SK-N-SH (cell line): ENCODE measurements at regions of chr18 and their contacts with region 1.

Region 1: GRCh38 chr18:47204908-47205522 is 28.9 kb upstream of the IER3IP1 start:
- DNase-seq: peak; percentile 33
- H3K4me3 ChIP-seq: no peak overlapping the region; a peak in 1 of 4 replicates
- H3K27ac ChIP-seq: peak overlapping the region in 1 of 2 experiments; percentile 93; a peak in 1 of 4 replicates
- H3K4me1 ChIP-seq: peaks cover 0 to 16% of the 10 kb centered on the region in 2 experiments; a peak in 2 of 4 replicates
- H3K27me3 ChIP-seq: no peaks in the 10 kb centered on the region
- CTCF ChIP-seq: peak; percentile 87
- EP300 ChIP-seq: no peak
- RAD21 ChIP-seq: peak; percentile 79

Region 2: DNA sequence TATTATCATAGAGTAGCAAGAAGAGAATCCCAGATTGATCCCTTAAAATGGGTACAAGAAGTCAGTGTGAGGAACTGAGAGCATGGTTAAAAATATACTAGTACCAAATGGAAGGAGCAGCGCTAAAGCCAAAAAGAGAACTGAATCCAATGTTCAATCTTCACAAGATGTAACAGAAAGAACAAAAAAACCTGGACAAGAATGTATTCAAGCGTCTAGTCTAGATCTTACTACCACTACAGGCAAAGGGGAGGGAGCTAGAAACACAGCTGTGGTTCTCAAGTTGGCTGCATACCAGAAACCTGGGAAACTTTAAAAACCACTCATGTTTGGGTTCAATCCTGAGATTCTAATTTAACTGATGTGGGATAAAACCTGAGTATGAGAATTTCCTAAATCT is 345.2 kb before region 1 on chr18:
- CTCF ChIA-PET with region 1: no interaction called
- POLR2A ChIA-PET with region 1: no interaction called
- DNase-seq: no peak
- H3K4me3 ChIP-seq: no peak overlapping the region
- H3K27ac ChIP-seq: no peak overlapping the region
- H3K4me1 ChIP-seq: no peaks in the 10 kb centered on the region
- H3K27me3 ChIP-seq: no peaks in the 10 kb centered on the region
- CTCF ChIP-seq: no peak
- EP300 ChIP-seq: no peak
- RAD21 ChIP-seq: no peak

Region 3: DNA sequence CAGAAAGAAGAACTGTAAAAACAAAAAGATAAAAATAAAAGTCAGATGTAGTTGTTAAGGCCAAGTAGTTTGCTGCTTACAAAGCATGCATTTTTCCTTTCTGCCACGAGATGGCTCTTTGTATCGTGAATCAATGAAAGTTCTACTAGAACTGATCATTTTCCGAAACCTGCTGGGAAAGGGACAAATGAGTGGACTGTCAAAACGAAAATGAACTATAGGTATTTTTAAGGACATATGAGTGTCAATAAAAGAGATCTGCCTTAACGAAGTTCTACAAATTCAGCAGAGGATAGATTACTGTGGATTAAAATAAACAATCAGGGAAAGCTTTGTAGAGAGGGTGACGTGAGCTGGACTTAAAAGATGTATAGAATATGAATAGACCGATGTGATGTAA is 154.5 kb before region 1 on chr18:
- CTCF ChIA-PET with region 1: interaction called, 83 read pairs
- POLR2A ChIA-PET with region 1: no interaction called
- DNase-seq: peak; percentile 42
- H3K4me3 ChIP-seq: no peak overlapping the region
- H3K27ac ChIP-seq: no peak overlapping the region
- H3K4me1 ChIP-seq: no peaks in the 10 kb centered on the region
- H3K27me3 ChIP-seq: no peaks in the 10 kb centered on the region
- CTCF ChIP-seq: peak; percentile 77
- EP300 ChIP-seq: no peak
- RAD21 ChIP-seq: peak; percentile 77

Region 4: GRCh38 chr18:47100214-47100831 is 104.7 kb before region 1 on chr18:
- CTCF ChIA-PET with region 1: interaction called, 74 read pairs
- POLR2A ChIA-PET with region 1: no interaction called
- DNase-seq: peak; percentile 51
- H3K4me3 ChIP-seq: no peak overlapping the region
- H3K27ac ChIP-seq: no peak overlapping the region
- H3K4me1 ChIP-seq: no peaks in the 10 kb centered on the region
- H3K27me3 ChIP-seq: no peaks in the 10 kb centered on the region
- CTCF ChIP-seq: peak; percentile 75
- EP300 ChIP-seq: no peak
- RAD21 ChIP-seq: peak; percentile 91

Region 5: GRCh38 chr18:47150029-47150823 is 54.8 kb before region 1 on chr18 and contains the start of gene HDHD2:
- CTCF ChIA-PET with region 1: interaction called, 15 read pairs
- POLR2A ChIA-PET with region 1: interaction called, 10 read pairs
- DNase-seq: peak; percentile 93
- H3K4me3 ChIP-seq: peak within 1 kb of the TSS; percentile 85 to 93
- H3K27ac ChIP-seq: peak within 1 kb of the TSS; percentile 91 to 98
- H3K4me1 ChIP-seq: peaks cover 0 to 18% of the 10 kb centered on the region in 2 experiments; a peak in 2 of 4 replicates
- H3K27me3 ChIP-seq: no peaks in the 10 kb centered on the region
- CTCF ChIP-seq: no peak
- EP300 ChIP-seq: no peak
- RAD21 ChIP-seq: no peak
- polyA plus RNA-seq, gene HDHD2: 10.5 and 10.6 TPM in 2 replicates

Region 6: DNA sequence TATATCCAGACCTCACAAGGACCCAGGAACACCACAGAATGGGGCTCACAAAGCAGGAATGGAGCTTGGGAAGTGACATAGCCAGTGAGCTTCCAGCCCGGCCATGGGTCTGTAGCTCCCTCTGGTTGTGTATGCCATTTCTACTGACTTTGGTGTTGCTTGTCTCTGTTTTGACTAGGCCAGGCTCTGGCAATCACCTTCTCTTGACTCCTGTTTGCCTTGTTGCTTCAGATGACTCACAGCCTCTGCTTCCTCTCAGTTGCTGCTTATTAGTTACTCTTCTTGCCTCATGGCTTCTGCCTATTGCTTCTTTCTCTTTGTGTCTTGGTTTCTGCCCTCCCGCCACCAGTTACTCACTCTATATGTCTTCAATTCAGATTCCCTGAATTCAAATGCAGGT is 13.1 kb before region 1 on chr18:
- CTCF ChIA-PET with region 1: interaction called, 21 read pairs
- POLR2A ChIA-PET with region 1: no interaction called
- DNase-seq: no peak
- H3K4me3 ChIP-seq: no peak overlapping the region
- H3K27ac ChIP-seq: no peak overlapping the region
- H3K4me1 ChIP-seq: no peaks in the 10 kb centered on the region
- H3K27me3 ChIP-seq: no peaks in the 10 kb centered on the region
- CTCF ChIP-seq: no peak
- EP300 ChIP-seq: no peak
- RAD21 ChIP-seq: no peak

Region 7: GRCh38 chr18:47420130-47420529 is 215.1 kb after region 1 on chr18:
- CTCF ChIA-PET with region 1: no interaction called
- POLR2A ChIA-PET with region 1: no interaction called
- DNase-seq: no peak
- H3K4me3 ChIP-seq: no peak overlapping the region
- H3K27ac ChIP-seq: no peak overlapping the region
- H3K4me1 ChIP-seq: no peaks in the 10 kb centered on the region
- H3K27me3 ChIP-seq: no peaks in the 10 kb centered on the region
- CTCF ChIP-seq: no peak
- EP300 ChIP-seq: no peak
- RAD21 ChIP-seq: no peak

Region 8: DNA sequence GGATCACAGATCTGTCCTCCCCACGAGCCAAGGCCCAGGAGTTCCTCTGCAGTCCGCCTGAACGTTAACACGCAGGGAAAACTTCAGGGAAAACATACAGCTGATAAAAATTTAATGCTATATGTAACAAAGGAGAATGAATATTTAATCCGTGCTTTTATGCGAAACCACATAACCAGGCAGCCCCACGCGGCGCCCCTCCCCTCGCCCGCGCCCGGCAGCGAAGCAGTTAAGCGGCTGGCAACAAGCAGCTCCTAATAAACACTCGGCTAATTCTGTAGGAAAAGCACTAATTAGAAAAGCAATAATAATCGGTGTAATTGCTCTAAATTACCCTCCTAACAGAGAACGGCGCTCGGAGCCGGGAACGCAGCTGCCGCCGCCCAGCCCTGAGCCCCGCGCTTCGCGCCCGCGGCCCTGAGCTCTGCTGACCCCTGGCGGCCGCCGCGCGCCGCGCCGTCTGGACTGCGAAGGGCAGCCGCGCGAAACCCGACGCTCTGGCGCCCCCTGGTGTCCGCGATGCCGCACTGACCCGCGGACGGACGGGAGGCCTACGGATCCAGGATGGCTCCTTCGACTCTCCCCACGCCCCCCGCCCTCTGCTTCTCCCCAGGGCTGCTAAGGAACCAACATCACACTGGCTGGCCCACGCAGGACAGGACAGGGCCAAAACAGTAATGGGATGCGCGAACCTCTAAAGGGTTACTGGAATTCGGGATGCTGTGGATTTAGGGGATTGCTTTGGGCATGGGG is 544.0 kb after region 1 on chr18:
- CTCF ChIA-PET with region 1: interaction called, 22 read pairs
- POLR2A ChIA-PET with region 1: no interaction called
- DNase-seq: peak; percentile 95
- H3K4me3 ChIP-seq: peak overlapping the region; percentile 42 to 72
- H3K27ac ChIP-seq: no peak overlapping the region
- H3K4me1 ChIP-seq: peaks cover 0 to 4% of the 10 kb centered on the region in 2 experiments; a peak in 1 of 4 replicates
- H3K27me3 ChIP-seq: no peaks in the 10 kb centered on the region
- CTCF ChIP-seq: peak; percentile 94
- EP300 ChIP-seq: no peak
- RAD21 ChIP-seq: peak; percentile 95